ENCODE measurements at regions of chr10 and their contacts with region 1.

Region 1: DNA sequence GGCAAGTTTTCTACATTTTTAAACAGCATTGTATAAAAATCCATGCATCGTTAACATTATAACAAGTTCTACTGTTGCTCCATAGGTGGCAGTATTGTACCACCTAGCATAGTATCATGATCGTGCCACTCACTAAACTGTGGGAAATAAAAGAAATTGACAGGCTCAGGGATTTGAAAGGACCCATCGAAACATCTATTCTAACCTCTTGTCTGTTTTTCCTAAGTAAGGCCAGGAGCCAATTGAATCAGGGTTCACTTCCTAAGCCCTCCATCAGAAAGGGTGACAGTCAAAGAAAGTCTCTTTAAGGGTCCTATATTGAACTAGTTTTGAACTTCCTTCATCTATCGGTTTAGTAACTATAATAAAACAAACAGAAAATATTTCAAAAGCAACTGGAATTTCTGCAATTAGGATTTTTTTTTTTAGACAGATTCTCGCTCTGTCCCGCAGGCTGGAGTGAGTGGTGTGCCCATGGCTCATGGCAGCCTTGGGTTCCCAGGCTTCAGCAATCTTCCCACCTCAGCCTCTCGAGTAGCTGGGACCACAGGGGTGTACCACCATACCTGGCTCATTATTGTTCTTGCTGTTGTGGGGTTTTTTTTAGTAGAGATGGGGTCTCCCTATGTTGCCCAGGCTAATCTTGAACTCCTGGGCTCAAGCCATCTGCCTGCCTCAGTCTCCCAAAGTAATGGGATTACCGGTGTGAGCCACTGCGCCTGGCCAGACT is 9.4 kb downstream of the HACD1 start:
- DNase-seq: no peak
- H3K4me3 ChIP-seq: no peak overlapping the region
- H3K27ac ChIP-seq: no peak overlapping the region
- H3K4me1 ChIP-seq: no peaks in the 10 kb centered on the region
- H3K27me3 ChIP-seq: no peaks in the 10 kb centered on the region
- CTCF ChIP-seq: peak; percentile 27 to 87 (median 85)
- POLR2A ChIP-seq: no peak

Region 2: GRCh38 chr10:17740668-17741067 is 132.9 kb after region 1 on chr10:
- intact Hi-C with region 1: loop called (anchors 2 kb)
- DNase-seq: no peak
- H3K4me3 ChIP-seq: no peak overlapping the region
- H3K27ac ChIP-seq: no peak overlapping the region
- H3K4me1 ChIP-seq: no peaks in the 10 kb centered on the region
- H3K27me3 ChIP-seq: no peaks in the 10 kb centered on the region
- CTCF ChIP-seq: no peak
- POLR2A ChIP-seq: no peak

Region 3: DNA sequence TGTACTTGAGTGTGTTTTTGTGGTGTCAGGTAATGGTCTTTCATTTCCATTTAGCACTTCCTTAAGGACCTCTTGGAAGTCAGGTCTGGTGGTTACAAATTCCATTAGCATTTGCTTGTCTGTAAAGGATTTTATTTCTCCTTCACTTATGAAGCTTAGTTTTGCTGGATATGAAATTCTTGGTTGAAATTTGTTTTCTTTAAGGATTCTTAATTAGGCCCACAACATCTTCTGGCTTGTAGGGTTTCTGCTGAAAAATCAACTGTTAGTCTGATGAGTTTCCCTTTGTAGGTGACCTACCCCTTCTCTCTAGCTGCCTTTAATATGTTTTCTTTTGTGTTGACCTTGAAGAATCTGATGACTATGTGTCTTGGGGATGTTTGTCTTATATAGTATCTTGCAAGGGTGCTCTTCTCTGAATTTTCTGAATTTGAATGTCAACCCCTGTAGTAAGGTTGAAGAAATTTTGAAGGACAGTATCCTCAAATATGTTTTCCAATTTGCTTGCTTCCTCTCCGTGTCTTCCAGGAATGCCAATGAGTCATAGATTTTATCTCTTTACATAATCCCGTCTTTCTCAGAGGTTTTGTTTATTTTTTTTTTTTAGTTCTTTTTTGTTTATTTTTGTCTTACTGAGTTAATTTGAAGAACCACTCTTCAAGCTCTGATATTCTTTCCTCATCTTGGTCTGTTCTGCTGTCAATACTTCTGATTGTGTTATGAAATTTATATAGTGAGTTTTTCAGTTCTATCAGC is 414.1 kb after region 1 on chr10:
- intact Hi-C with region 1: no loop called
- DNase-seq: no peak
- H3K4me3 ChIP-seq: no peak overlapping the region
- H3K27ac ChIP-seq: no peak overlapping the region
- H3K4me1 ChIP-seq: no peaks in the 10 kb centered on the region
- H3K27me3 ChIP-seq: no peaks in the 10 kb centered on the region
- CTCF ChIP-seq: no peak
- POLR2A ChIP-seq: no peak

Region 4: DNA sequence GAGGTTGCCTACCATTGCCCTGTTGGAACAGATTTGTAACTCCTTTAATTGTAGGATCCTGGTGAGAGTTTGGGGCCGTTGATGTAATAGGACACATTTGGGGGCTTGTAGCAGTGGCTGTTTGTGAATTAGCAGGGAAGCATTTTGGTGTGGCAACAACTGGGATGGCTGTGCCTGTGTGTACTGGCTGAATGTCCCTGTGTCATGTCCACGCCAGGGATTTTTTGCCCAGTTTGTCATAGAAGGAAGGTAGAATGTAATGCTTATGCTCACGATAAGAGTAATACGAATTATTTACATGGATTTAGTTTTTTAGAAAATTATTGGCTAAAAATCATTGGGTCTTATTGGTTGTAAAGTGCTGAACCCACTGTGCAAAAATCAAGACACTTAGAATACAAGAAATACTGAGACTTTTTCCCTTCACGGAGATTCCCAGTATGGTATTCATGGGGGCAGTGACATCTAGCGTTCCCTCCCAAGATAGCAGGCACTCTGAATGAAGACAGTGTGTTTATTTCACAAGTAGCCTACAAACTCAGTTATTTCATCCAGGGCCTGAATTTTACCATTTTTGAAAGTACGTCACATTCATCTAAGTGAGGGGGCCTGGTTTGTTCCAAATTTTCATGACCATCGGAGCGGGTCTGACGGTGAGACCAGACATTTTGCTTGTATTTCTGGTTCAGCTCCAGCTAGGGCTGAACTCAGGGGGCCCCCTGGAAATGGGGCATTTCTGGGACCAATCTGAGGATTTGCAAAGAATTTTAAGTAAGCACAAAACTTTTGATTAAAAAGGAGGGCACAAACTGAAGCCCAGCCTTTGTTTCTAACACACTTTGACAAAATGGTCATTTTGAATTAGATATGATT is 607.2 kb after region 1 on chr10:
- intact Hi-C with region 1: loop called (anchors 10 kb)
- DNase-seq: peak; percentile 33
- H3K4me3 ChIP-seq: no peak overlapping the region
- H3K27ac ChIP-seq: no peak overlapping the region
- H3K4me1 ChIP-seq: no peaks in the 10 kb centered on the region
- H3K27me3 ChIP-seq: no peaks in the 10 kb centered on the region
- CTCF ChIP-seq: peak in 3 of 4 experiments; percentile 51 to 68 (median 63)
- POLR2A ChIP-seq: no peak

Measured in prostate gland (tissue), 2 donors.